ENCODE measurements at regions of chr16 and their contacts with region 1.

Region 1: DNA sequence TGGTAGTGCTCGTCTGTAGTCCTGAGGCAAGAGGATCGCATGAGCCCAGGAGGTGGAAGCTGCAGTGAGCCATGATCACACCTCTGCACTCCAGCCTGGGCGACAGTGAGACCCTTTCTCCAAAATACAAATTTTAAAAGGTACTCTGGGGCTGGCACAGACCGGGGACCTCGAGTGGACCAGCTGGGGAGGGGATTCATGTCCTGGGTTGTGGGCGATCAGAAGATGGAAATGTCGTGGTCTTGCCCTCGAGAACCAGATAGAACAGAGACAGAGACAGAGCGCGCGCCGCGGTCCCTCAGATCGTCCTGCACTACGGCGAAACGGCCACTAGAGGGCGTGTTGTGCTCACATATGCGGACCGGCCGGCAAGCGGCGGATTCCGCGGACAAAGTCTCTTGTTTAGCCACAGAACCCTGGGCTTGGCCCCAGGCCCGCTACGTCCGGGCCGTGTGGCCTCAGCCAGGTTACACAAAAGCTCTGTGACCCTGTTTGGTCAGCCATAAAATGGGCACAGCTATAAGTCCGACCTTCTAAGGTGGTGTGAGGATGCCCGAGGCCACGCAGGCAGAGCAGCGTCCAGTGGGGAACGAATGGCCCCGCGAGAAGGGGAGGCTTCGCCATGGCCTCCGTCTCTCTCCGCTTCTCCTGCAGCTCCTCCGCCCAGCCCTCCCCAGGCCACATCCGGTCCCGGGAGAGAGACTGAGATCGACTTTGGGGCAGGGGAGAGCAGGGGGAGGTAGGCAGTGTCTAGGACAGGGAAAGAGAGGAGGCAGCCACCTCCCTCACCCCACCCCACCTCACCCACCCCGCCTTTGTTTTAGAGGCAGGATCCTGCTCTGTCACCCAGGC is 14.6 kb upstream of the SBK1 start:
- DNase-seq: peak; percentile 86 to 87
- H3K4me3 ChIP-seq: peak overlapping the region in 1 of 3 donors; percentile 9
- H3K27ac ChIP-seq: no peak overlapping the region
- H3K4me1 ChIP-seq: peaks cover 0 to 9% of the 10 kb centered on the region in 2 donors
- H3K27me3 ChIP-seq: no peaks in the 10 kb centered on the region
- CTCF ChIP-seq: peak; percentile 91 to 97 (median 96)
- POLR2A ChIP-seq: no peak

Region 2: GRCh38 chr16:28117168-28117565 is 160.6 kb before region 1 on chr16:
- intact Hi-C with region 1: no loop called
- DNase-seq: no peak
- H3K4me3 ChIP-seq: no peak overlapping the region
- H3K27ac ChIP-seq: no peak overlapping the region
- H3K4me1 ChIP-seq: peaks cover 0 to 5% of the 10 kb centered on the region in 2 donors
- H3K27me3 ChIP-seq: no peaks in the 10 kb centered on the region
- CTCF ChIP-seq: no peak
- POLR2A ChIP-seq: no peak

Region 3: DNA sequence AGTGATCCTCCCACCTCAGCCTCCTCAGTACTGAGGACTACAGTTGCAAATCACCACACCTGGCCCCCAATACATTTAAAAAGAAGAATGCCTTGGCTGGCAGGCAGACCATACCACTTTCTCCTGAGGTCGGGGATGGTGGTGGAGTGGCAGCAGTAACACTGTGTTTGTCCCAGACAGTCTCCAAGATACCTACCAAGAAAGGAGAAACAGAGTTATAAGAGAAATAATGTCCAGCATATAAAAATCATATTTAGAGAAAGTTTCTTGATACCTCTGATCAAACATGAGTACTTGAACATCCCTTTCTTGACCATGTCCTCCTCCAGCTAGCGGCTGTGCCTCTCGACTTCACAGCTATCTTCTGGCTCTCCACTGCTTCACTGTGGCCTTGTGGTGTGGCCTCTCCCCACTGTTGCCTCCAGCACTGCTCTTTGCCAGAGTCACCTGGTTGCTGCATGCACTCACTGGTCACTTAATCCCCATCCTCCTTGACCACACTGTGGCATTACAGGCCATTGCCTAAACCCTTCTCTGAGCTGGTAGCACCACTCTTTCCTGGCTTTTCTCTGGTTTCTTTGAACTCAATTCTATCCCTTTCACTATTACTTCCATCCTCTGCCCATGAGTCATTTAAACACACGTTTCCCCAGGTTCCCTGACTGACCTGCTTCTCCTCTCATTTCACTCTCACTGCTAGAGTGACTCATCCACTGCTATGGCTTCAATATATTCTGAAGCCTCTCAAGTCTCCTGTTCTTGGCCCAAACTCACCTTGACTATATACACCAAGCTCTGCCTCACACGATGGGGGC is 111.2 kb before region 1 on chr16:
- intact Hi-C with region 1: no loop called
- DNase-seq: no peak
- H3K4me3 ChIP-seq: no peak overlapping the region
- H3K27ac ChIP-seq: no peak overlapping the region
- H3K4me1 ChIP-seq: peaks cover 15 to 17% of the 10 kb centered on the region in 2 donors
- H3K27me3 ChIP-seq: no peaks in the 10 kb centered on the region
- CTCF ChIP-seq: no peak
- POLR2A ChIP-seq: no peak

Region 4: DNA sequence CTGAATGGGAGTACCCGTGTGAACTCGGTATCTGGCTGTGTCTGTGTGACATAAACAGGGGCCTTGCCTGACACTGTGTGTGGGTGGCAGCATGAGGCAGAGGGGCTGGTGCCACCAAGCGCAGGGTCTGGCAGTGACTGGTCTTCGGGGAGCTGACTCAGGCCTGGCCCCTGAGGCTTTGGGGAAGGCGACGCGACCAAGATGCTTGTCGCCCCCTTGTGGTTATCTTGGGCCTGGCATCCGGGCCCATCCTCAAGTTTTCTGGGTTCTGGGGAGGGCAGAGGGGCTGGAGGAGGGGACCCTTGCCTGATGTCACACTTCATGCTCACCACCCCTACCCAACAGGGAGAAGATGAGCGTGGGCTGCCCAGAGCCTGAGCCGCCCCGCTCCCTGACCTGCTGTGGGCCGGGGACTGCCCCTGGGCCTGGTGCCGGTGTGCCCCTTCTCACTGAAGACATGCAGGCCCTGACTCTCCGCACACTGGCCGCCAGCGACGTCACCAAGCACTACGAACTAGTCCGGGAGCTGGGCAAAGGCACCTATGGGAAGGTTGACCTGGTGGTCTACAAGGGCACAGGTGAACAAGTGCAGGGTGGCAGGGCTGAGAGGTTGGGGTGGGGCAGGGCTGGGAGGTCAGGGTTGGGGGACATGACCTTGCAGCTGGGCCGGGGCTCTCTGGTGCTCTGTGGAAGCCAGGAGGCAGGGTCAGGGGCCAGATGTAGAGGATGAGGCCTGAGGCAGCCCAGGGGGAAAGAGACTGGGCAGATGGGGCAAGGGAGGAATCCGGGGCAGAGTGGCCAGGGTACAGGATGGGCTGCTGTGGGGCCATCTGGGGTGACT is 39.5 kb after region 1 on chr16:
- intact Hi-C with region 1: loop called (anchors 2 kb)
- DNase-seq: peak; percentile 57 to 60
- H3K4me3 ChIP-seq: no peak overlapping the region
- H3K27ac ChIP-seq: no peak overlapping the region
- H3K4me1 ChIP-seq: no peaks in the 10 kb centered on the region
- H3K27me3 ChIP-seq: no peaks in the 10 kb centered on the region
- CTCF ChIP-seq: peak; percentile 51 to 85 (median 68)
- POLR2A ChIP-seq: no peak